Aorta (tissue), 5 donors: ENCODE measurements at regions of chr2 and their contacts with region 1.

Region 1: DNA sequence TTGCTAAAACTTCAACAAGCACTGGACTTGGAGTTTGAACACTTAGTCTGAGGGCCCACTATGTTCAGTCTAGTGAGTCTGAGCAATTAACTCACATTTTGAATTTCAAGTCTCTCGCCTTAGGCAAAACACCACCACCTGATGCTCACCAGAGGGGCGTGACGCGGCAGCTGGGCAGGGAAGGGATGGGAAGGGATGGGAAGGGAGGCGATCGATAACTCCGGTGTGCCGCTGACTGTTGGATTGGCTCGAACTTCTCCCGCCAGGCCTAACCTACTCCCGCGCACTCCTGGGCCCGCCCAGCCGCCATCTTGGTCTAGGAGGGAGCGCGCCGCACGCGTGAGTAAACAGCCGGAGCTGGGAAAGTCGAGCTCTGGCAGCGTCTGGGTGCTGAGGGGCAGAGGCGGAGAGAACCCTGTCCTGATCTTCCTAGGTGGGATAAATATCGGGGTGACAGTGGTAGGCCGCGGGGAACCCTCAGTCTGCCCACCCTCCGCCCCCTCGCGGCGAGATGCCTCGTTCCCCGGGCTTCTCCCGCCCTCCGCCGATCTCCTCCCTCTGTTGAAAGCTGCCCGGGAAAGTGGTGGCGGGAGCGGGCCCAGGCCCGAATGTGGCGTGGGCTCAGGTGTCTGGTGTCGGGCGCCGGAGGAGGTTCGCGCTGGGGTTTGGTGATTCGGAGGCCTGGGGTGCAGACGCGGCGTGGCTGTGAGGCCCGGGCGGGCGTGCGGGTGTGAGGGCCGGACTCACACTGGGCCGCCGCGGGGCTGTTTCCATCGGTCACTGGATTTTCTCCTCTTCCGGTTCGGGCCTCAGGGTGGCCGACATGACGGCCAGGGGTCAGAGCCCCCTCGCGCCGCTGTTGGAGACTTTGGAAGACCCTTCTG is at the start of gene RIF1:
- DNase-seq: peak; percentile 94 to 96
- ATAC-seq: peak; percentile 98
- H3K4me3 ChIP-seq: peak within 1 kb of the TSS; percentile 81 to 93
- H3K27ac ChIP-seq: peak within 1 kb of the TSS; percentile 45 to 70
- H3K4me1 ChIP-seq: no peaks in the 10 kb centered on the region
- H3K27me3 ChIP-seq: no peaks in the 10 kb centered on the region
- total RNA-seq, gene RIF1: 37.2 to 49.1 TPM

Region 2: GRCh38 chr2:151289369-151290088 is 120.3 kb before region 1 on chr2 and contains the start of gene NMI:
- intact Hi-C with region 1: loop called (anchors 2 to 10 kb)
- DNase-seq: peak; percentile 88 to 91
- ATAC-seq: peak; percentile 94
- H3K4me3 ChIP-seq: peak within 1 kb of the TSS; percentile 55 to 58
- H3K27ac ChIP-seq: peak within 1 kb of the TSS; percentile 43 to 61
- H3K4me1 ChIP-seq: no peaks in the 10 kb centered on the region
- H3K27me3 ChIP-seq: no peaks in the 10 kb centered on the region
- total RNA-seq, gene NMI: 10.1 to 13.6 TPM

Region 3: GRCh38 chr2:151465771-151466170 is 55.9 kb after region 1 on chr2:
- intact Hi-C with region 1: loop called in 1 of 2 experiments (anchors 10 kb)
- DNase-seq: no peak
- ATAC-seq: no peak
- H3K4me3 ChIP-seq: no peak overlapping the region
- H3K27ac ChIP-seq: no peak overlapping the region
- H3K4me1 ChIP-seq: no peaks in the 10 kb centered on the region
- H3K27me3 ChIP-seq: no peaks in the 10 kb centered on the region